CD4-positive, alpha-beta memory T cell (primary cell): ENCODE measurements at regions of chr1 and their contacts with region 1.

Region 1: GRCh38 chr1:159891275-159892157 is 8.4 kb downstream of the CFAP45 start:
- DNase-seq: peak; percentile 67 to 74 (median 72)
- H3K4me3 ChIP-seq: no peak overlapping the region
- H3K4me3 Mint-ChIP-seq: no peak overlapping the region
- H3K27ac ChIP-seq: no peak overlapping the region
- H3K27ac Mint-ChIP-seq: peak overlapping the region in 3 of 7 donors; percentile 39 to 85 (median 68)
- H3K4me1 ChIP-seq: peaks cover 17% of the 10 kb centered on the region
- H3K4me1 Mint-ChIP-seq: peaks cover 13 to 22% (median 17%) of the 10 kb centered on the region in 4 donors
- H3K27me3 ChIP-seq: no peaks in the 10 kb centered on the region
- H3K27me3 Mint-ChIP-seq: no peaks in the 10 kb centered on the region

Region 2: GRCh38 chr1:159132271-159132881 is 759.1 kb before region 1 on chr1:
- CTCF ChIA-PET with region 1: interaction called, 3 read pairs
- POLR2A ChIA-PET with region 1: no interaction called
- intact Hi-C with region 1: loop called (anchors 1 kb)
- DNase-seq: peak; percentile 41 to 59 (median 49)
- H3K4me3 ChIP-seq: no peak overlapping the region
- H3K4me3 Mint-ChIP-seq: no peak overlapping the region
- H3K27ac ChIP-seq: no peak overlapping the region
- H3K27ac Mint-ChIP-seq: no peak overlapping the region
- H3K4me1 ChIP-seq: no peaks in the 10 kb centered on the region
- H3K4me1 Mint-ChIP-seq: no peaks in the 10 kb centered on the region
- H3K27me3 ChIP-seq: no peaks in the 10 kb centered on the region
- H3K27me3 Mint-ChIP-seq: peaks cover 4 to 12% of the 10 kb centered on the region in 2 donors

Region 3: DNA sequence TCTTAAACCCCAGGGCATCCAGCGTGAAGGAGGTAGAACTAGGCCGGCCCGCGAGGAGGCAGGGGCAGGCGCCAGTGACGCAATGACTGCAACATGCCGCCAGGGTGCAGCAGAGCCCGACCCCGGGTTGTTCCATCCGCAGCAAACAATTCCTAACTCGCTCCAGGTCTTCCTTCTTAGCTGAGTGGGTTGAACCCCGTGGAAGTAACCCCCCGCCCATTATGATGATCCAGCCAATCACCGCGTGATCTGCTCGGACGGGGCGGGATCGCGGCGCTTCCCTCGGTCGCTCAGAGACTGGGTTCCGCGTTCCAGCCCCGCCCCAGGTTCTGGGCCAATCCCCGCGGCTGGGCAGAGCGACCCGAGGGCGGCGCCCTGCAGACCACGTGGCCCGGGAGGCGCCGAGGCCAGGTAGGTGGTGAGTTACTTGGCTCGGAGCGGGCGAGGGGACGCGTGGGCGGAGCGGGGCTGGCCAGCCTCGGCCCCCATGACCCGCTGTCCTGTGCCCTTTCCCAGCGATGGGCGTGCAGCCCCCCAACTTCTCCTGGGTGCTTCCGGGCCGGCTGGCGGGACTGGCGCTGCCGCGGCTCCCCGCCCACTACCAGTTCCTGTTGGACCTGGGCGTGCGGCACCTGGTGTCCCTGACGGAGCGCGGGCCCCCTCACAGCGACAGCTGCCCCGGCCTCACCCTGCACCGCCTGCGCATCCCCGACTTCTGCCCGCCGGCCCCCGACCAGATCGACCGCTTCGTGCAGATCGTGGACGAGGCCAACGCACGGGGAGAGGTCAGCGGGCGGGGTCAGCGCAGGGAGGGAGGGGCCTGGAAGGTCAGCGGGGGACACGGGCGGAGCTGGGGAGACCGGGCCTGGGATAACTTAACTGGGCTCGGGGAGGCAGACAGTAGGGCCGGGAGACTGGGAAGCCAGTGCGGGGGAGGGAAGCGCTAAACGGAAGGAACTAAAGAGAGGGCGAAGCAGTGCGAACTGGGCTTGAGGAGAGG is 110.6 kb before region 1 on chr1 and contains the start of gene DUSP23:
- CTCF ChIA-PET with region 1: interaction called, 116 read pairs
- POLR2A ChIA-PET with region 1: interaction called, 14 read pairs
- intact Hi-C with region 1: loop called (anchors 1 kb)
- DNase-seq: peak; percentile 96 to 97 (median 97)
- H3K4me3 ChIP-seq: peak within 1 kb of the TSS; percentile 39 to 57
- H3K4me3 Mint-ChIP-seq: peak within 1 kb of the TSS; percentile 83 to 93 (median 87)
- H3K27ac ChIP-seq: peak within 1 kb of the TSS; percentile 61
- H3K27ac Mint-ChIP-seq: peak within 1 kb of the TSS; percentile 81 to 96 (median 92)
- H3K4me1 ChIP-seq: peaks cover 16% of the 10 kb centered on the region
- H3K4me1 Mint-ChIP-seq: peaks cover 14 to 55% (median 36%) of the 10 kb centered on the region in 4 donors
- H3K27me3 ChIP-seq: no peaks in the 10 kb centered on the region
- H3K27me3 Mint-ChIP-seq: no peaks in the 10 kb centered on the region
- total RNA-seq, gene DUSP23: 14.5 to 15.7 TPM

Region 4: GRCh38 chr1:159872881-159873280 is 18.6 kb before region 1 on chr1:
- CTCF ChIA-PET with region 1: interaction called, 17 read pairs
- POLR2A ChIA-PET with region 1: no interaction called
- intact Hi-C with region 1: no loop called
- DNase-seq: no peak
- H3K4me3 ChIP-seq: no peak overlapping the region
- H3K4me3 Mint-ChIP-seq: no peak overlapping the region
- H3K27ac ChIP-seq: no peak overlapping the region
- H3K27ac Mint-ChIP-seq: no peak overlapping the region
- H3K4me1 ChIP-seq: no peaks in the 10 kb centered on the region
- H3K4me1 Mint-ChIP-seq: peaks cover 0 to 3% (median 0%) of the 10 kb centered on the region in 4 donors
- H3K27me3 ChIP-seq: no peaks in the 10 kb centered on the region
- H3K27me3 Mint-ChIP-seq: peaks cover 0 to 3% of the 10 kb centered on the region in 2 donors

Region 5: GRCh38 chr1:159924981-159925712 is 33.6 kb after region 1 on chr1 and contains the start of gene TAGLN2:
- CTCF ChIA-PET with region 1: interaction called, 87 read pairs
- POLR2A ChIA-PET with region 1: interaction called, 62 read pairs
- intact Hi-C with region 1: loop called (anchors 1 kb)
- DNase-seq: peak; percentile 87 to 91 (median 89)
- H3K4me3 ChIP-seq: peak within 1 kb of the TSS; percentile 89 to 93
- H3K4me3 Mint-ChIP-seq: peak within 1 kb of the TSS; percentile 94 to 99 (median 98)
- H3K27ac ChIP-seq: peak within 1 kb of the TSS; percentile 98
- H3K27ac Mint-ChIP-seq: peak within 1 kb of the TSS; percentile 99 to 100 (median 100)
- H3K4me1 ChIP-seq: peaks cover 41% of the 10 kb centered on the region
- H3K4me1 Mint-ChIP-seq: peaks cover 29 to 63% (median 41%) of the 10 kb centered on the region in 4 donors
- H3K27me3 ChIP-seq: no peaks in the 10 kb centered on the region
- H3K27me3 Mint-ChIP-seq: peaks cover 0 to 5% of the 10 kb centered on the region in 2 donors
- total RNA-seq, gene TAGLN2: 196 to 207 TPM

Region 6: DNA sequence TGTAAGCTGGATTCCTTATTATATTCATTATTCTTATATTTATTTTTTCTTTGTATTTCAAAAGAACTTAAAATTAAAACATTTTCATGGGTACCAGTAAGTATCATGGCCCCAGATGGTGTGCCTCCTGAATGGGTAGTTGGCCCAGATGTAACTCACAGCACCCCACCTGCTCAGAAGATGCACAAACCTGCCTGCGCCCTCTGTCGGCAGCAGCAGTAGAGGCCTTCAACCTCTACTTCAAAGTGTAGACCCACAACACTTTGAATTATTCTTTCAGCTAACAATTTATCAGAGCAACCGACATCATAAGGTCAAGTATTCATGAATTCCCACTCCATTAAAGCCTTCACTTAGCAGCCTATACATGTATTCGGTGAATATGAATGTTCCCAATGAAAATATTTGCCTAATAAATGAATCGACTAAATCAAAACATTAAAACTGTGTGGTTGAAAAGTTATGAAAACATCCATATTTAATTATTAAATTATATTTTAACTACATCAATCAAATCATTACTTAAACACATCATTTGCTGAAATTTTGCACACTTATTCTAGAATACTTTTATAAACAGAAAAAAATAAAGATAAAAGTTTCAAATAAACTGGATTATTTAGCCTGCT is 114.9 kb after region 1 on chr1:
- CTCF ChIA-PET with region 1: interaction called, 73 read pairs
- POLR2A ChIA-PET with region 1: no interaction called
- intact Hi-C with region 1: loop called (anchors 1 kb)
- DNase-seq: peak; percentile 59 to 69 (median 62)
- H3K4me3 ChIP-seq: no peak overlapping the region
- H3K4me3 Mint-ChIP-seq: no peak overlapping the region
- H3K27ac ChIP-seq: no peak overlapping the region
- H3K27ac Mint-ChIP-seq: peak overlapping the region in 1 of 7 donors; percentile 13
- H3K4me1 ChIP-seq: no peaks in the 10 kb centered on the region
- H3K4me1 Mint-ChIP-seq: no peaks in the 10 kb centered on the region
- H3K27me3 ChIP-seq: no peaks in the 10 kb centered on the region
- H3K27me3 Mint-ChIP-seq: peaks cover 1 to 5% of the 10 kb centered on the region in 2 donors

Region 7: GRCh38 chr1:160108888-160109662 is 217.6 kb after region 1 on chr1:
- CTCF ChIA-PET with region 1: no interaction called
- POLR2A ChIA-PET with region 1: no interaction called
- intact Hi-C with region 1: no loop called
- DNase-seq: peak in 2 of 5 donors; percentile 21 to 35
- H3K4me3 ChIP-seq: no peak overlapping the region
- H3K4me3 Mint-ChIP-seq: peak overlapping the region in 1 of 8 donors; percentile 62
- H3K27ac ChIP-seq: no peak overlapping the region
- H3K27ac Mint-ChIP-seq: peak overlapping the region in 2 of 7 donors; percentile 5 to 37
- H3K4me1 ChIP-seq: no peaks in the 10 kb centered on the region
- H3K4me1 Mint-ChIP-seq: no peaks in the 10 kb centered on the region
- H3K27me3 ChIP-seq: no peaks in the 10 kb centered on the region
- H3K27me3 Mint-ChIP-seq: peaks cover 1 to 12% of the 10 kb centered on the region in 2 donors